ENCODE measurements at regions of chr12 and their contacts with region 1.

Region 1: DNA sequence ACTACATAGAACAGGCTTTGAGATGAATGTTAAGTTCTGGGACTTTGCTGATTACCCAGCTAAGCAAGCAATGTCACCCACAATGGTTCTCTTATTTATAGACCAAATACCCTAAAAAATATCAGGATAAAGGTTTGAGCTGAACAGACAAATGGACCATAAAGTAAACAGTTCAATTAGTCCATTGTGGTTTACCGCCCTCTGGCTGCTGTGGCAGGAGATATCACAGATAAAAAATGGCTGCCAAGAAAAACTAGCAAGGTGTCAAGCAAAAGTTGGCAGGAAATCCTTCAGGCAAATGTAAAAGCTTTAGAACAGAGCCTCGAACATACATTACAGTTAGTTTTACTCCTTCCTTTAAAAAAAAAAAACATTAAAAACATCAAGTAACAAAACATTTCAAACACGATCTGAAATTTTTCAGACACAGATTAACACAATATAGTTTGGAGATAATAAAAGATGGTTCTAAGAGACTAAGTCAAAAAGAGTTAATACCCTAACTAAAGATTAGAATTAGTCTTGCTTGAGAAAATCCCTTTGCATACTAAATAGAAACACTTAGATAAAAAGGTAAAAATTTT is 41.3 kb downstream of the MED13L start:
- DNase-seq: peak in 1 of 2 donors; percentile 40
- H3K4me3 ChIP-seq: no peak overlapping the region
- H3K27ac ChIP-seq: peak overlapping the region in 1 of 2 donors; percentile 28
- H3K4me1 ChIP-seq: peaks cover 0 to 75% (median 33%) of the 10 kb centered on the region in 4 donors
- H3K27me3 ChIP-seq: no peaks in the 10 kb centered on the region
- CTCF ChIP-seq: peak; percentile 60 to 69

Region 2: DNA sequence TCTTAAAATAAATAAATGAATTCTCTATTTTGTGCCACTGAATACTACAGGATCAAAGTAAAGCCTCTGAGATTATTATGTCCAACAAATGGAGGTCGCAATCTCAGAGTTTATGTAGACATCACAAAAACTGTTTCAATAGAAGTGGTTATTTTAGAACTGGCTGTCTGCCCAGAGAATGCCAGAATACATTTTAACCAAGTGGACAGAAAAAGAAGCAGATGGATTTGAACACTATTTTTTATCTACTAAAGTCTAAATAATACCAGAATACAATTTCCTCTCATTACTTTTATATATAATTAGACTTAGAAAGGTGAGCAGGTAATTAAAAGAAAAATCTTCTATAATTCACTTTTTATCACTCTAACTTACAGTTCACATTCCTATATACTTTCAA is 77.1 kb before region 1 on chr12:
- intact Hi-C with region 1: loop called (anchors 10 kb)
- DNase-seq: no peak
- H3K4me3 ChIP-seq: no peak overlapping the region
- H3K27ac ChIP-seq: no peak overlapping the region
- H3K4me1 ChIP-seq: peaks cover 0 to 90% (median 41%) of the 10 kb centered on the region in 4 donors
- H3K27me3 ChIP-seq: no peaks in the 10 kb centered on the region
- CTCF ChIP-seq: no peak

Region 3: GRCh38 chr12:116559162-116559935 is 323.1 kb after region 1 on chr12 and contains the start of gene MAP1LC3B2:
- intact Hi-C with region 1: no loop called
- DNase-seq: peak in 1 of 2 donors; percentile 22
- H3K4me3 ChIP-seq: no peak within 1 kb of the TSS
- H3K27ac ChIP-seq: no peak within 1 kb of the TSS
- H3K4me1 ChIP-seq: peaks cover 0 to 14% (median 0%) of the 10 kb centered on the region in 4 donors
- H3K27me3 ChIP-seq: no peaks in the 10 kb centered on the region
- CTCF ChIP-seq: no peak

Measured in tibial artery (tissue), 4 donors.